Right cardiac atrium (tissue), 5 donors: ENCODE measurements at regions of chr5 and their contacts with region 1.

Region 1: GRCh38 chr5:75566710-75567309 is 44.4 kb upstream of the ANKDD1B start:
- DNase-seq: no peak
- ATAC-seq: peak; percentile 94 to 99
- H3K4me3 ChIP-seq: no peak overlapping the region
- H3K27ac ChIP-seq: peak overlapping the region; percentile 71
- H3K4me1 ChIP-seq: peaks cover 9% of the 10 kb centered on the region
- H3K27me3 ChIP-seq: no peaks in the 10 kb centered on the region

Region 2: GRCh38 chr5:75511435-75512384 is 55.1 kb before region 1 on chr5 and contains the starts of genes CERT1 and POLK:
- intact Hi-C with region 1: loop called in 1 of 4 experiments (anchors 5 kb)
- DNase-seq: peak; percentile 99
- ATAC-seq: peak; percentile 99
- H3K4me3 ChIP-seq: peak within 1 kb of the TSS; percentile 87
- H3K27ac ChIP-seq: peak within 1 kb of the TSS; percentile 93
- H3K4me1 ChIP-seq: no peaks in the 10 kb centered on the region
- H3K27me3 ChIP-seq: no peaks in the 10 kb centered on the region
- total RNA-seq, gene CERT1: 26.1 to 28.7 (median 28.0) TPM
- total RNA-seq, gene POLK: 24.3 to 25.7 (median 24.9) TPM

Region 3: DNA sequence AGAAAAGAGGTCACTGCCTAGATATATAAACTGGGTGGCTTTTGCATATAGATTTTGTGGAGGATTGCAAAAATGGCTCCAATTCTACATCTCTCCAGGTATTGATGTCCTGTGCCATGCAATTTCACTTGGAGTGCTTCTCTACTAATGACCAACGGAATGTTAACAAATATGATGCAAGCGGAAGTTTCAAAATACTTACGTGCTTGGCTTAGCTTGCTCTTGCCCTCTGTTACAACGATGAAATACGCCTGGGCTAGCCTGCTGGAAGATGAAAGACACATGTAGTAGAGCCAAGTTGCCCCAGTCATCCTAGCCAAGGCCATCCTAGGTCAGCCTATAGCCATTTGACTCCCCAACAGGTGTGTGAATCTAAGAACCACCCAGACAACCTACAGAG is 154.1 kb after region 1 on chr5:
- intact Hi-C with region 1: no loop called
- DNase-seq: no peak
- ATAC-seq: no peak
- H3K4me3 ChIP-seq: no peak overlapping the region
- H3K27ac ChIP-seq: no peak overlapping the region
- H3K4me1 ChIP-seq: no peaks in the 10 kb centered on the region
- H3K27me3 ChIP-seq: no peaks in the 10 kb centered on the region